ENCODE measurements at regions of chr1 and their contacts with region 1.

Region 1: GRCh38 chr1:156860113-156860627 is 495 bp upstream of the NTRK1 start:
- DNase-seq: peak in 4 of 5 donors; percentile 49 to 64 (median 52)
- H3K4me3 ChIP-seq: peak overlapping the region; percentile 49 to 63
- H3K4me3 Mint-ChIP-seq: peak overlapping the region; percentile 73 to 87 (median 84)
- H3K27ac ChIP-seq: no peak overlapping the region
- H3K27ac Mint-ChIP-seq: peak overlapping the region in 6 of 7 donors; percentile 20 to 86 (median 66)
- H3K4me1 ChIP-seq: peaks cover 29% of the 10 kb centered on the region
- H3K4me1 Mint-ChIP-seq: peaks cover 8 to 45% (median 26%) of the 10 kb centered on the region in 4 donors
- H3K27me3 ChIP-seq: peaks cover 16% of the 10 kb centered on the region
- H3K27me3 Mint-ChIP-seq: peaks cover 31 to 37% of the 10 kb centered on the region in 2 donors

Region 2: DNA sequence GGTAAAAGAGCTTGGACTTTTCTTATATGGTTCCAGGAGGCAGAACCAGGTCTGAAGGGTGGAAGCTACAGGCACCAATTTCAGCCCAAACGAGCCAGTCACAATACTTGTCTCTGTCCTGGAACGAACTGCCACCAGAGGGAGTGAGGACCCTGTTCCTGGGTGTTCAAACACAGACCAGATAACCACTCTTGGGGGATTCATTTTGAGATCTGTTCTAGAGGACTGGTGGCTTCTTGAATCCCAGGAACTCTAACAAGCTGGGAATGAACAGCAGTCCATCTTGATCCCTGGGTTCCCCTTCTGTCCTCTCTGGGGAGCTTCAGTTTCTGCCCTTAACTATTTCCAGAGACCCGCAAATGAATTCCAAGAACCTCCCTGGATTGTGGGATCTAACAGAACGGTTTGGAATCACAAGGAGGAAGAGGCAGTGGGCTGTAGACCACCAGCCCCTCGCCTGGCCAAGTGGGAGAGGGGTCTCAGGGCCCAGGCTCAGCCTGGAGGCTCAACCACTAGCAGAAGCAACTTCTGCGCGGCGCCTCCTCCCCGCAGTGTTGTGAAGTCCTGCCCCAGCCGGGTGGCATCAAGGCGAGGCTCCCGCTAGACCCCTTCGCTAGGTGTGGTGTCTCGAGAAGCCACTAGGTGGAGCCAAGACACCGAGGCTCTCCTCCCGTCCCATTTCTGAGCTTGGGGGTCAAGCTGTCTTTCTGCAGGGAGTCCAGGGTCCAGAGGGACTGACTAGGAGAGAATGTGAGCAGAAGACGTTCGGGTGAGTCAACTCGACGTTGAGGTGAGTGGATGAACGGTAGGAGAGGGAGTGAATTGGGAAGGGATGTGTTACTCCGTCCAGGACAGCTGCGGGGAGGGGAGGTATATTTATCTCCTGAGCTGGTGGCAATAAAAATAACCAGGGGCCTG is 170.9 kb before region 1 on chr1:
- CTCF ChIA-PET with region 1: interaction called, 48 read pairs
- POLR2A ChIA-PET with region 1: interaction called, 4 read pairs
- intact Hi-C with region 1: loop called (anchors 1 kb)
- DNase-seq: peak; percentile 70 to 77 (median 73)
- H3K4me3 ChIP-seq: peak overlapping the region in 1 of 2 donors; percentile 2
- H3K4me3 Mint-ChIP-seq: peak overlapping the region in 5 of 8 donors; percentile 25 to 69 (median 68)
- H3K27ac ChIP-seq: no peak overlapping the region
- H3K27ac Mint-ChIP-seq: peak overlapping the region in 2 of 7 donors; percentile 33 to 89
- H3K4me1 ChIP-seq: peaks cover 25% of the 10 kb centered on the region
- H3K4me1 Mint-ChIP-seq: peaks cover 8 to 23% (median 17%) of the 10 kb centered on the region in 4 donors
- H3K27me3 ChIP-seq: peaks cover 29% of the 10 kb centered on the region
- H3K27me3 Mint-ChIP-seq: peaks cover 30 to 39% of the 10 kb centered on the region in 2 donors

Region 3: GRCh38 chr1:156781585-156782186 is 78.5 kb before region 1 on chr1:
- CTCF ChIA-PET with region 1: interaction called, 344 read pairs
- POLR2A ChIA-PET with region 1: no interaction called
- intact Hi-C with region 1: no loop called
- DNase-seq: no peak
- H3K4me3 ChIP-seq: no peak overlapping the region
- H3K4me3 Mint-ChIP-seq: no peak overlapping the region
- H3K27ac ChIP-seq: no peak overlapping the region
- H3K27ac Mint-ChIP-seq: peak overlapping the region in 4 of 7 donors; percentile 3 to 47 (median 34)
- H3K4me1 ChIP-seq: peaks cover 11% of the 10 kb centered on the region
- H3K4me1 Mint-ChIP-seq: peaks cover 17 to 35% (median 26%) of the 10 kb centered on the region in 4 donors
- H3K27me3 ChIP-seq: no peaks in the 10 kb centered on the region
- H3K27me3 Mint-ChIP-seq: no peaks in the 10 kb centered on the region

Region 4: GRCh38 chr1:156804572-156805243 is 55.5 kb before region 1 on chr1:
- CTCF ChIA-PET with region 1: interaction called, 344 read pairs
- POLR2A ChIA-PET with region 1: interaction called, 66 read pairs
- intact Hi-C with region 1: loop called (anchors 1 kb)
- DNase-seq: no peak
- H3K4me3 ChIP-seq: no peak overlapping the region
- H3K4me3 Mint-ChIP-seq: no peak overlapping the region
- H3K27ac ChIP-seq: no peak overlapping the region
- H3K27ac Mint-ChIP-seq: peak overlapping the region in 6 of 7 donors; percentile 67 to 88 (median 82)
- H3K4me1 ChIP-seq: peaks cover 42% of the 10 kb centered on the region
- H3K4me1 Mint-ChIP-seq: peaks cover 35 to 83% (median 49%) of the 10 kb centered on the region in 4 donors
- H3K27me3 ChIP-seq: no peaks in the 10 kb centered on the region
- H3K27me3 Mint-ChIP-seq: no peaks in the 10 kb centered on the region

Region 5: DNA sequence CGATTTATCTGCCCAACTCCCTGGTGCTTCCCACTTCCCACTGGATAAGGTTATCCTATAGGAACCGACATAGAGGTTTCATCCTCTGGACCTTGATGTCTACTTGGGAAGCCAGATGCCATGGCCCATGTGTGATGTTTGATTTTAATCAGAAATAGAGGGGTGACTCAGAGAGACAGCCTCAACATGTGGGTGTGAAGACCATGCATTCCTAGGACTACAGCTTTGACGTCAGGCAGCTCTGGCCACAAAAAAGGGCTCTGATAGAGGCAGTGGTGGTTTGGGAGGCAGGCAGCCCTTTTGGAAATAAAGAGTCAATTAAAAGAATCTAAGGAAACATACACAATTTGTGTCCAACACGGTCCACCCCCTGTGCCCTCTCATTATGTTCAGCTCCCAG is 38.4 kb before region 1 on chr1:
- CTCF ChIA-PET with region 1: interaction called, 56 read pairs
- POLR2A ChIA-PET with region 1: interaction called, 14 read pairs
- intact Hi-C with region 1: no loop called
- DNase-seq: no peak
- H3K4me3 ChIP-seq: no peak overlapping the region
- H3K4me3 Mint-ChIP-seq: no peak overlapping the region
- H3K27ac ChIP-seq: no peak overlapping the region
- H3K27ac Mint-ChIP-seq: peak overlapping the region in 2 of 7 donors; percentile 13 to 49
- H3K4me1 ChIP-seq: peaks cover 13% of the 10 kb centered on the region
- H3K4me1 Mint-ChIP-seq: peaks cover 7 to 20% (median 12%) of the 10 kb centered on the region in 4 donors
- H3K27me3 ChIP-seq: no peaks in the 10 kb centered on the region
- H3K27me3 Mint-ChIP-seq: peaks cover 0 to 3% of the 10 kb centered on the region in 2 donors

Region 6: DNA sequence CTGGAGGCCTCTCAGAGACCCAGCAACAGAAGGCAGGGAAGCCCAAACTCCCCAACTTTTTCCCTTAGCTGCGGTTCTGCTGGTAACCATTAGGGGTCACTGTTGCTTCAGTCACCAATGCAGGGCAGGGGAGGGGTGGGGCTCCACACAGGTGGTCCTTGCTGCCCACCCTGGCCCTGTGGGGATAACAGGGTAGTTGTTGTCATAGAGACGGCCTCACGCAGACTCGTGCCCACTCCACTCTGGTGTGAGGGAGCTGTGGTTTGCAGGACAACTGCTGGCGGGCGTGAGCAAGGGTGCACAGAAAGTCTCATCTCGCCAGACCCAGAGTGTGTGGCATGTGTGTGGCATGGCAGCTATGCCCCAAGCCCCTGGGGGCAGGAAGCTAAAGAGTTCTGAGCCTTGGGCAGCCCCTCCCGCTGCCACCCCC is 21.2 kb before region 1 on chr1:
- CTCF ChIA-PET with region 1: interaction called, 204 read pairs
- POLR2A ChIA-PET with region 1: interaction called, 19 read pairs
- intact Hi-C with region 1: loop called (anchors 1 kb)
- DNase-seq: peak in 4 of 5 donors; percentile 52 to 66 (median 55)
- H3K4me3 ChIP-seq: no peak overlapping the region
- H3K4me3 Mint-ChIP-seq: no peak overlapping the region
- H3K27ac ChIP-seq: no peak overlapping the region
- H3K27ac Mint-ChIP-seq: peak overlapping the region in 6 of 7 donors; percentile 5 to 81 (median 54)
- H3K4me1 ChIP-seq: peaks cover 12% of the 10 kb centered on the region
- H3K4me1 Mint-ChIP-seq: peaks cover 4 to 24% (median 10%) of the 10 kb centered on the region in 4 donors
- H3K27me3 ChIP-seq: peaks cover 11% of the 10 kb centered on the region
- H3K27me3 Mint-ChIP-seq: peaks cover 16 to 45% of the 10 kb centered on the region in 2 donors